ENCODE measurements at regions of chr5 and their contacts with region 1.

Region 1: GRCh38 chr5:96868603-96869371 is 7.5 kb upstream of the ERAP2 start:
- DNase-seq: peak; percentile 39
- H3K4me3 Mint-ChIP-seq: no peak overlapping the region
- H3K27ac Mint-ChIP-seq: peak overlapping the region; percentile 93
- H3K4me1 Mint-ChIP-seq: peaks cover 54% of the 10 kb centered on the region
- H3K27me3 Mint-ChIP-seq: no peaks in the 10 kb centered on the region

Region 2: DNA sequence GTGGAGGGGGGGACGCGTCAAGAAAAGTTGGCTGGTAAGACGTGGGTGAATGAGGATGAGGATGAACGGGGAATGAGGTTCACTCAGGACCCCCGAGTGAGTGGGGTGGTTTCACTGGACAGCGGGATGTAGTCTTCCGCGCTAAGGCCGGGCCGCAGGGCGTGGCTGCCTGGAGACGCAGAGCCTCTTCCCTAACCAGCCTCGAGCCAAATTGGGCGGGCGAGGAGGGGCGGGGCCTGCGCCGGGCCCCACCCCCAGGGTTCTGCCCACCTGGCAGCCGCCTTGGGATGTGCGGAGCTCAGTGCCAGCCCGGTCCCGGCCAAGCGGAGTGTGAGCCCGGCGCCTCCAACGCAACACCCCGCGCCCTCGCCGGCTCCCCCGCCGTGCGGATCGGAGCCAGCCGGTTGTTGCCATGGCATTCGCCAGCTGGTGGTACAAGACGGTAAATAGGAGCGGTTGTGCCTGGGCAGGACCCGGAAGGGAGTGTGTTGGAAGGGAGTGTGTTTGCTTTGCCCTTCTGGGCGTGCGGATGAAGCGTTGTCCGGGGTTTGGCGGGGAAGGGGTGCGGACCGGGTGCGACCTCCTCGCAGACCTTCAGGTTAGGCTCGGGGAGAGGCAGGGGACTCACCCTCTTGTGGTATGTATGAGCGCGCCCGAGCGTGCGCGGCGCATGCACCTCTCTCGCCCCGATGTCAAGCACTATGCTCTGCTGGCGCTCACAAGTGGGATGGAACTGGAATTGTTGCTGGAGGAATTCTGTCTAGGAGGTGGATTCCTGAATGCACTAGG is 205.9 kb before region 1 on chr5:
- CTCF ChIA-PET with region 1: no interaction called
- intact Hi-C with region 1: loop called (anchors 5 kb)
- DNase-seq: peak; percentile 89
- H3K4me3 Mint-ChIP-seq: peak overlapping the region; percentile 96
- H3K27ac Mint-ChIP-seq: peak overlapping the region; percentile 96
- H3K4me1 Mint-ChIP-seq: peaks cover 22% of the 10 kb centered on the region
- H3K27me3 Mint-ChIP-seq: peaks cover 3% of the 10 kb centered on the region

Region 3: GRCh38 chr5:96816411-96816939 is 52.3 kb before region 1 on chr5:
- CTCF ChIA-PET with region 1: interaction called, 8 read pairs
- intact Hi-C with region 1: loop called (anchors 1 kb)
- DNase-seq: peak; percentile 84
- H3K4me3 Mint-ChIP-seq: peak overlapping the region; percentile 71
- H3K27ac Mint-ChIP-seq: peak overlapping the region; percentile 91
- H3K4me1 Mint-ChIP-seq: peaks cover 80% of the 10 kb centered on the region
- H3K27me3 Mint-ChIP-seq: no peaks in the 10 kb centered on the region

Region 4: GRCh38 chr5:96934708-96935558 is 66.1 kb after region 1 on chr5:
- CTCF ChIA-PET with region 1: interaction called, 13 read pairs
- intact Hi-C with region 1: loop called (anchors 1 kb)
- DNase-seq: peak; percentile 93
- H3K4me3 Mint-ChIP-seq: peak overlapping the region; percentile 85
- H3K27ac Mint-ChIP-seq: peak overlapping the region; percentile 99
- H3K4me1 Mint-ChIP-seq: peaks cover 51% of the 10 kb centered on the region
- H3K27me3 Mint-ChIP-seq: no peaks in the 10 kb centered on the region

Region 5: DNA sequence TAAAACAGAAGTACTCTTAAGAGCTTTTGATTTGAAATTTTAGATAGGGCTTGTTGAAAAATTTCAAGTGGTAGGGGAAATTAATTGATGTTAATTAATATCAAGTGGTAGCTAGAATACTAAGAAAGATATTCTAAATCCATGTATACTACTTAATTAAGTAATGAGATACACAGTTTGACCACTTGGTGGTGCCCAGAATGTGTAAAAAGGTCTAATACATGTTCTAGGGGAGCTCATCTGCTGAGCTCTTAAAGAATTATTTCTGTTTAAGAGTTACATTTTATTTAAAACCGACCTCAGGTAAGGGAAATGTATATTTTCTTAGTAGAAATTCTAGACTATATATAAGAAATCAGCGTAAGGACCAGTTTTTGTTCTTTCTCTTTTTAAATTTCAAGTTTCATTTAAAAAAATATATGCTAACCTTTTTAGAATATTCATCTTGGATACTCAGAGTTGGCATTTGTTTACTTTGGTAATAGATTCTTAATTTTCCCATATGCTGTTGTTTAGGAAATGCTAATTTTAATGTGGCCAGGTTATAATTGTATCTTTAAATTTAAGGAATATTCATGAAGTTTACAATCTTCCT is 128.6 kb after region 1 on chr5:
- CTCF ChIA-PET with region 1: interaction called, 16 read pairs
- intact Hi-C with region 1: no loop called
- DNase-seq: peak; percentile 33
- H3K4me3 Mint-ChIP-seq: no peak overlapping the region
- H3K27ac Mint-ChIP-seq: no peak overlapping the region
- H3K4me1 Mint-ChIP-seq: peaks cover 23% of the 10 kb centered on the region
- H3K27me3 Mint-ChIP-seq: no peaks in the 10 kb centered on the region

Region 6: GRCh38 chr5:97071101-97071500 is 202.3 kb after region 1 on chr5:
- CTCF ChIA-PET with region 1: no interaction called
- intact Hi-C with region 1: no loop called
- DNase-seq: no peak
- H3K4me3 Mint-ChIP-seq: no peak overlapping the region
- H3K27ac Mint-ChIP-seq: no peak overlapping the region
- H3K4me1 Mint-ChIP-seq: no peaks in the 10 kb centered on the region
- H3K27me3 Mint-ChIP-seq: no peaks in the 10 kb centered on the region

Region 7: DNA sequence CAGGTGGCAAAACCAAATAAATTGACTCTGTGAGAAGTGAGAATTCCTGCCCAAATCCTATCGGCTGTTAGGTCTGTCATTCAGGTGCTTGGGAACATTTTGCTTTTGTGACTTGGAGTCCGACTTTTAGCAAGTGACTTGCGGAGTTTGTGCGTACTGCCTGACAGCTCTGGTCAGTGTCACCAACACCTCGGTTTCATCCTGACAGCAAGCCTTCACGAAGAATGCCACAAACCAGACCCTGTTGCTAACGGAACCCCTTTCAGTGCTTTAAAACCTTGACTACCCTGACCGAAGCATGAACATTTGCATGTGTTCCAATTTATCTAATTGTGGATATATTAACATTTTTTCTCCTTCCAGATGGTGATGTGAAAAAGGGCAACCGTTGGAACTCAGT is 247.1 kb after region 1 on chr5:
- CTCF ChIA-PET with region 1: interaction called, 4 read pairs
- intact Hi-C with region 1: loop called (anchors 1 kb)
- DNase-seq: no peak
- H3K4me3 Mint-ChIP-seq: no peak overlapping the region
- H3K27ac Mint-ChIP-seq: no peak overlapping the region
- H3K4me1 Mint-ChIP-seq: peaks cover 4% of the 10 kb centered on the region
- H3K27me3 Mint-ChIP-seq: no peaks in the 10 kb centered on the region

Measured in activated naive CD4-positive, alpha-beta T cell treated with anti-CD3 and anti-CD28 coated beads for 36 hours (primary cell).